ENCODE measurements at regions of chr22 and their contacts with region 1.

Region 1: GRCh38 chr22:41621099-41621910 is at the start of gene XRCC6:
- DNase-seq: peak; percentile 99
- ATAC-seq: peak; percentile 92
- H3K4me3 Mint-ChIP-seq: peak within 1 kb of the TSS; percentile 97
- H3K27ac Mint-ChIP-seq: peak within 1 kb of the TSS; percentile 98
- H3K4me1 Mint-ChIP-seq: peaks cover 33% of the 10 kb centered on the region
- H3K27me3 Mint-ChIP-seq: no peaks in the 10 kb centered on the region
- total RNA-seq, gene XRCC6: 215 to 222 TPM

Region 2: DNA sequence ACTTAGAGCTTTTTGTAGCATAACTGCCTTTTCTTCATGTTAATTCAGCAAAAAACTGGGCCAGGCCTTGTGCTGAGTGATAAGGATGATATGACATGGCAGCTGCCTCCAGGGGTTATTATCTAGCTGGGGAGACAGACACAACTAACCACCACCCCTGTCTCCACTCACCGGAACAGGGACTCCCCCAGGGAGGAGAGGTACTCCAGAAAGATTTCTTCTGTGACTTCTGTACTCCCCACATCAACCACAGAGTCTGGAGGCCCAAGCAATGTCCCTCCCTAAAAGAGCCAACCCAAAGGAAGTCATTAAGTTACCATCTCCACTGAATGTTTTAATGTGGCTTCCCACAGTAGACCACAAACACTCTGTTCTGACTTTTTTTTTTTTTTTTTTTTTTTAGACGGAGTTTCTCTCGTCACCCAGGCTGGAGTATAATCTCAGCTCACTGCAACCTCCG is 17.4 kb before region 1 on chr22:
- POLR2A ChIA-PET with region 1: interaction called, 35 read pairs
- DNase-seq: peak; percentile 56
- ATAC-seq: peak; percentile 93
- H3K4me3 Mint-ChIP-seq: peak overlapping the region; percentile 29
- H3K27ac Mint-ChIP-seq: peak overlapping the region; percentile 61
- H3K4me1 Mint-ChIP-seq: peaks cover 29% of the 10 kb centered on the region
- H3K27me3 Mint-ChIP-seq: peaks cover 13% of the 10 kb centered on the region

Region 3: GRCh38 chr22:41666661-41667258 is 45.5 kb after region 1 on chr22:
- POLR2A ChIA-PET with region 1: interaction called, 10 read pairs
- DNase-seq: peak; percentile 97
- ATAC-seq: peak; percentile 98
- H3K4me3 Mint-ChIP-seq: peak overlapping the region; percentile 84
- H3K27ac Mint-ChIP-seq: peak overlapping the region; percentile 98
- H3K4me1 Mint-ChIP-seq: peaks cover 8% of the 10 kb centered on the region
- H3K27me3 Mint-ChIP-seq: no peaks in the 10 kb centered on the region

Region 4: DNA sequence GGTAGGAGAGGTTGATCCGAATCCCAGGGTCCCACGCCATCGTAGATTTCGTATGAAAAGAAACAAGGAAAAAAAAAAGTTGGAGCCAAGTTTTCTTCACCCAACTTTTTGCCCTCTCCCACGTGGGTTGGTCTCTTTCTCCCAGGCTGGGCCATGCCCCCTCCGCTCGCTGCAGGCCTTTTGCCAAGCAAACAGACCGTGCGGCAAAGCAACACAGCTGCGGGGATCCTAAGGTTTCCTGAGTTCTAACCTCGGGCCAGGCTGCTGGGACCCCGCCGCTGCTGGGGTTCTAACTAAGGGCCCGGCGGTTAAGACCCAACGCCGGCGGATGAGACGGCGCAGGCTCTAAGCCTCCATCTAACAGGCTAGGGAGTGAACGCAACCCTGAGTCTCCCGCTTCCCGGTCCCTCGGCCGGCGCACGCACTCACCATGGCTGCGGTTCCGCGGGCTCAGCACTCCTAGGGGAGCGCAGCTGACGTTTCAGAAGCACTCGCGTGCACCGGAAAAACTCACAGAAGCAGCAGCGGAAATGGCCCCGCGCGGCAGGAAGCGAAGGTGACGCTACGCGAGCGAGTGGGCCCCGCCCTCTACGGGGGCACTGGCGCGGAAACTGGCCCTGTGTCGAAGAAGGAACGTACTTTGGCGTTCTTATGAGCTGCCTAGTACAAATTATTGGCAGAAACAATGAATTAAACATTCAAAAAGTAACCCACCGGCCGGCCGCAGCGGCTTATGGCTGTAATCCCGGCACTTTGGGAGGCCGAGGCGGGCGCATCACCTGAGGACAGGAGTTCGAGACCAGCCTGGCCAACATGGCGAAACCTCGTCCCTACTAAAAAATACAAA is 67.3 kb after region 1 on chr22 and contains the start of gene SNU13:
- POLR2A ChIA-PET with region 1: interaction called, 18 read pairs
- DNase-seq: peak; percentile 91
- ATAC-seq: peak; percentile 90
- H3K4me3 Mint-ChIP-seq: peak within 1 kb of the TSS; percentile 95
- H3K27ac Mint-ChIP-seq: peak within 1 kb of the TSS; percentile 99
- H3K4me1 Mint-ChIP-seq: peaks cover 22% of the 10 kb centered on the region
- H3K27me3 Mint-ChIP-seq: no peaks in the 10 kb centered on the region
- total RNA-seq, gene SNU13: 150 to 153 TPM